ENCODE measurements at regions of chr22 and their contacts with region 1.

Region 1: GRCh38 chr22:46542011-46542985 is 4.9 kb upstream of the CELSR1 start:
- DNase-seq: no peak
- ATAC-seq: peak; percentile 76

Region 2: DNA sequence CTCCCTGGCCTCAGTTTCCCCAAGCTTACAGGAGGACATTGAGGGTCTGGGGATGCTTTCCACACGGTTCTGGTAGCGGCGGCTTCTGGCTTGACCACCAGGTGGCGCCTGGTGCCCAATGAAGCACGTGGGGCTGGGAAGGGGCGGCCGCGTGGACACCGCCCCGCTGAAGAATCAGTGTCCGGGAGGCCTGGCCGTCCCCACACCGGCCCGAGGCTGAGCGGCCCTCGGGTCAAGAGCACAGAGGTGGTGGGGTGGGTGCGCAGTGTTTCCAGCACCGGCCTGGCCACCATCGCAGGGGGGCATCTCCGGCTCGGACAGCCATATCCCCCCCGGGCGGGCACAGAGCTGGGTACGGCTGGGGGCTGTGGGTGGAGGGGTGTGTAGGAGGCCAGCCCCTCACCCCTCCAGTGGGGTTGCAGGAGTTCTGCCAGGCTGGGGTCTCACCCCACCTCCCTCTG is 419.8 kb before region 1 on chr22:
- intact Hi-C with region 1: loop called (anchors 5 kb)
- DNase-seq: peak; percentile 90
- ATAC-seq: peak; percentile 57

Region 3: DNA sequence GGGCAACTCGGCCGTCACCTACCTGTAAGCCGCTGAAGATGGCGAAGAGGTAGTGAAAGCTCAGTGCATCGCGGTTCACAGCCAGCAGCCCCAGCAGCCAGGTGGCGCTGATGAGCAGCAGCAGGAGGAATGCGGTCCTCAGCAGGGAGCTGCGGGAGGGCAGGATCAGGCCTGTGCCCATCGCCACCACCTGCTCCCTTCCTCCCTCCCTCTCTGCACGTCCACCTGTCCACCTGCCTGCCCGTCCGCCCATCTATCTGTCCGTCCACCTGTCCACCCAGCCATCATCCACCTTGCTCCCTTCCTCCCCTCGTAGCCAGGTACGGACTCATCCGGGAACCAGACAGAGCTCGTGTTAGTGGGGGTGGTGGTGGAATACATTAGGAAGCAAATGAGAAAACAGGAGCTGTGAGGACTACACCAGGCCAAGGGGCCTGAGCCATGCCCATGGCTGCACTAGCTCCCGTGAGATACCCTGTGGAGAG is 174.5 kb before region 1 on chr22:
- intact Hi-C with region 1: loop called (anchors 2 kb)
- DNase-seq: peak; percentile 86
- ATAC-seq: no peak

Region 4: DNA sequence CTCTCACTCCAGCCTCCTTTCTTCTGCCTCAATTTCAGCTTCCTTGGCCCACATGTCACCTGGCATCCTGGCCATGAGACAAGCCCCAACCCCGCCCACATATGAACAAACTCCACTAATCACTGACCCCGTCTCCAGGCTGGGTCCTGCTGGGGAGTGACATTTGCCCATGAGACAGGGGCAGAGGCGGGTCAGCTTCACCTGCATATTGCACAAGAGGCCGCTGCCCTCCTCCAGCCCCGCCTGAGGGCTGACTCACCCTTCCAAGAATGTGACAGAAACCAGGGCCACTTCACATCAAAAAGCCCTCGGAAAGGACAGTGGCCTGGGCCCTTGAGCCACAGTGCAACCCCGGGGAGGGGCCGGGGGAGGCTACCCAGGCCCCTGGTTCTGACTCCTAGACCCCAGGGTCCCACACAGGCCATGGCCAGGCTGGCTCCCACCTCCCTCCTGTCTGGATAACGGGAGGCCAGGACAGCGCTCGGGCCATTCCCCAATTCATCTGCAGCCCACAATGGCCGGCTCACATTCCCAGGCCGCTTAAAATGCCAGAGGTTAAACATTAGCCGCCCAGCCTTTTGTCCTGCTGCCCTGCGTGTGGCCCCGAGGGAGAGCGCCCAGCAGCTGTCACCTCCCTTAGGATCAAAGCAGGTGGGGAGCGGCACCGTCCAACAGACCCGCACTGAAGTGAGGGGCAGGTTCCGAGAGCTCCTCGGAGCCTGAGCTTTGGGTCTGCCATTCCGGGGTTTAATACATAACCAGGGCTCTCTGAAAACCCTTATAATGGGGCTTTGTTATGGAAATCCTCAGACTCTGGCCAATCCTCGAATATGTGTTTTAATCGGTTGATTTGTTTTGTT is 164.5 kb before region 1 on chr22:
- intact Hi-C with region 1: loop called (anchors 5 kb)
- DNase-seq: peak; percentile 32
- ATAC-seq: peak; percentile 65

Region 5: GRCh38 chr22:46457524-46458488 is 84.5 kb before region 1 on chr22:
- intact Hi-C with region 1: loop called (anchors 10 kb)
- DNase-seq: no peak
- ATAC-seq: no peak

Region 6: GRCh38 chr22:46484861-46485595 is 57.3 kb before region 1 on chr22:
- intact Hi-C with region 1: no loop called
- DNase-seq: no peak
- ATAC-seq: no peak

Region 7: GRCh38 chr22:46501701-46502100 is 40.6 kb before region 1 on chr22:
- intact Hi-C with region 1: no loop called
- DNase-seq: no peak
- ATAC-seq: no peak

Measured in Right ventricle myocardium inferior (tissue), 1 donor.